ENCODE measurements at regions of chr15 and their contacts with region 1.

Region 1: DNA sequence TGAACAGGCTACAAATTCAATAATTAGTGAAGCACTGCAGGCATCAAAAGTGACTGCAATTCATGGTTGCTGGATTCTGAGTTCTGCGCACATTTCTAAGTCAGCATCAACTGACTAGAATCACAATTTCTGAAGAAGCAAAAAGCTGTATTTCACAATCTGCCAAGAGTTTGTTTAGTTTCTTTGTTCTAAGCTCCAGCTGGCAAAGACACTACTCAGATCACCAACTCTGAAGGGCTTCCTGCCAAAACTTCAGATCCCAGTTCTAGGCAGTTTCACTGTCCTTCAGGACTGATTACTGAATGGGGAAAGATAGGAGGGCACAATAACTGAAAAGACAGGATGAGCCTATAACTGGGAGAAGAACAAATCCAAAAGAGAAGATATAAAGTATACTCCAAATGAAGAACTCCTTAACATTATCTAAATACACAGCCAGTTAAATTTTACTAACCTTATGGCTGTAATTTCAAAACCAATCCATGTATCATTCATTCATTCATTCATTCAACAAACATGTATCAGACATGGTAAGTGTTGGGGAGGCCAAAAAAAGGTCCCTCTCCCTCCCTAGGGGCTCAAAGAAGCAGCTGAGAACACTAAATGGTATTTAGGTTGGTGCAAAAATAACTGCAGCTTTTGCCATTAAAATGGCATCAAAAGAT is 17.1 kb downstream of the TJP1 start:
- DNase-seq: peak in 1 of 2 donors; percentile 15
- ATAC-seq: peak; percentile 63 to 73
- H3K4me3 ChIP-seq: no peak overlapping the region
- H3K27ac ChIP-seq: peak overlapping the region in 2 of 4 donors; percentile 28 to 30
- H3K4me1 ChIP-seq: peaks cover 36 to 55% of the 10 kb centered on the region in 2 donors
- H3K27me3 ChIP-seq: no peaks in the 10 kb centered on the region
- CTCF ChIP-seq: no peak
- POLR2A ChIP-seq: no peak

Region 2: DNA sequence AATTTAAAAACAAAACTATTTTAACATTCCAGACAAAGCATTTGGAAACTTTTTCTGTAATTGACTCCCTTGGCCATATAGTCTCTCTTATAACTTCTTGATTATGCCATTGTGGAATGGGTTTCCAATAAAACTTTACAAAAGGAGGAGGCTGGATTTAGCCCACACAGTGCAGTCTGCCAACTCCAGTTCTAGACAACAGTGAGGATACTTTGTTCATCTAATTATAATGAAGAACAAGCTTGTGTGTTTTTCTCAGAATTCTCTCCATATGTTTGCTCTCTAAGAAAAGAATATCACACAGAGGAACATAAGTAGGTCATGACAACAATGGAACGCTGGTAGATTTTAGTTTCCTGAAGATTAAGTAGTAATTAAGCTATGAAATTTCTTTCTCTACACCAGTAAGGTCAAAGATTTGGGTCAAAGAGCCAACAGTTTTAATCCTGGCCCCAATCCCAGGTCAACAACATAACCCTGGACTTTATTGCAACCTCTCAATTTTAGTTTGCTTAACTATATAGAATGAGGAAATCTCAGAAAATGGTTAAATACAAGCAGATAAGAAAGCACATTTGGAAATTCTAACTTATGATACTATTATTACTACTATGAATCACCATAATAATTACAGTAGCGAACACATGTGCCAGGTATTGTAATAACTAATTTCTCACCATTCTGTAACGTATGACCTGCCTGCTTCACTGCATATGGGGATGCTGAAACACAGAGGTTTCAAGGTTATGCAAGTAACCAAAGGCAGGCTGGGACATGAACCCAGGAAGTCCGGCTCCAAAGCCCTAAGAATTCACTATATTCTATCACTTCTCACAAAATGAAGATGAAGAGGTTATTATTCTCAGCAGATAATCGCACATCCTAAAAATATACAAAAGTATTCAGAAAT is 48.6 kb before region 1 on chr15:
- in situ Hi-C with region 1: no loop called
- intact Hi-C with region 1: loop called (anchors 5 kb)
- DNase-seq: no peak
- ATAC-seq: peak in 1 of 2 donors; percentile 46
- H3K4me3 ChIP-seq: no peak overlapping the region
- H3K27ac ChIP-seq: peak overlapping the region in 1 of 4 donors; percentile 39
- H3K4me1 ChIP-seq: peaks cover 14 to 20% of the 10 kb centered on the region in 2 donors
- H3K27me3 ChIP-seq: no peaks in the 10 kb centered on the region
- CTCF ChIP-seq: no peak
- POLR2A ChIP-seq: no peak

Measured in gastrocnemius medialis (tissue), 4 donors.